Activated B cell treated with CpG ODN at 0.5 μM for 24 hours (primary cell): ENCODE measurements at regions of chr10 and their contacts with region 1.

Region 1: DNA sequence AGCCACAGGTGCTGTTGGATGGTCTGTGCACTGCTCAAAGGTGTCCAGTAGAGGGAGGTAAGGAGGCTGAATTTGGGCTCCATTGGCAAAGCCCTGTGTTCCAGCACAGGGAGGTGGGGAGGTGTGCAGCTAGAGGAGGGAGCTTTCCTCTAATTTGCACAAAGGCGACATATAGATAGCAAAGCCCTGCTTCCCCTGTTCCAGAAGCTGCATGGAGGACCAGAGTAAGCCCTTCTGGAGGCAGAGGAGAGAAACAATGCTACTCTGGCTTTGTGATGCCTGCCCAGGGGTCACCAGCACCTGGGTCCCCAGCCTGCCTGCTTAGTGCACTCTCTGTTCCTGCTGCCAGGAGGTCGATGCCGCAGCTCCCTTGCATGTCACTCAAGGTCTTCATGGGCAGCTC is 3.4 kb upstream of the ARHGAP22 start:
- DNase-seq: no peak
- ATAC-seq: peak; percentile 89
- H3K4me3 Mint-ChIP-seq: no peak overlapping the region
- H3K27ac Mint-ChIP-seq: no peak overlapping the region
- H3K4me1 Mint-ChIP-seq: peaks cover 41% of the 10 kb centered on the region
- H3K27me3 Mint-ChIP-seq: peaks cover 6% of the 10 kb centered on the region
- CTCF ChIP-seq: no peak

Region 2: GRCh38 chr10:48363617-48364355 is 244.5 kb before region 1 on chr10:
- CTCF ChIA-PET with region 1: interaction called, 4 read pairs
- POLR2A ChIA-PET with region 1: no interaction called
- intact Hi-C with region 1: loop called (anchors 1 kb)
- DNase-seq: no peak
- ATAC-seq: no peak
- H3K4me3 Mint-ChIP-seq: no peak overlapping the region
- H3K27ac Mint-ChIP-seq: no peak overlapping the region
- H3K4me1 Mint-ChIP-seq: peaks cover 3% of the 10 kb centered on the region
- H3K27me3 Mint-ChIP-seq: no peaks in the 10 kb centered on the region
- CTCF ChIP-seq: no peak

Region 3: DNA sequence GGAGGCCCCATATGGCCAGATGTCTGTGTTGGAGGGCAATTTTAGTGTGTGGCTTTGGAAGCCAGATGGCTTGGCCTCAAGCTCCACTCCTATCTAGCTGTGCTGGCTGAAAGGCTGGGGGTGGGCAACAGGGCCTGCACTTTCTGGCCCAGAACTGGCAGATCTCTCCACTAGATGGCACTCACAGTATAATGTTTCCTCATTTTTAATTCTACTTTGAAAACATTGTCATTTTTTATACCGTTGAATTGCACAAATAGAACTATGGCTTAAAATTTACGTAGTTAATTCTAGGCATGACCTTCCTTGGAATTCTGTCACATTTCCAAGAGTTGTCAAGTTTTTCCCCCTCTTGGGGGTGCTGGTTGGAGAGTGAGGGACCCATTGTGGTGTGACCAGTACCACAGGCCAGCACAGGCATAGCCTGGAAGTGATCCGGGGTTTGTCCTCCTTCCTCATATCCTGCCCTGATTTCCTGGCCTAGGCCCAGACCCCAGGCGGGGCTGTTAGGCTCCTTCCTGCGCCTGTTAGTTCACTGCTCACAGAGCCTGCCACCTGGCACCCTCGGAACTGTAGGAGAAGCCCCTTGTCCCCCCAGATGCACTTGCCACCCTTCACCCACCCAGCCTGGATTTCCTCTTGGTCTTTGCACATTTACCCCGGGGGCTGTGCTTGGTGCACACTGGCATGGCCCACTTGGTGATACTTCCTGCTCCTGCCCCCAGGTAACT is 56.3 kb before region 1 on chr10:
- CTCF ChIA-PET with region 1: interaction called, 59 read pairs
- POLR2A ChIA-PET with region 1: interaction called, 4 read pairs
- intact Hi-C with region 1: loop called (anchors 1 kb)
- DNase-seq: peak; percentile 27
- ATAC-seq: peak; percentile 89
- H3K4me3 Mint-ChIP-seq: no peak overlapping the region
- H3K27ac Mint-ChIP-seq: no peak overlapping the region
- H3K4me1 Mint-ChIP-seq: peaks cover 11% of the 10 kb centered on the region
- H3K27me3 Mint-ChIP-seq: peaks cover 5% of the 10 kb centered on the region
- CTCF ChIP-seq: no peak

Region 4: DNA sequence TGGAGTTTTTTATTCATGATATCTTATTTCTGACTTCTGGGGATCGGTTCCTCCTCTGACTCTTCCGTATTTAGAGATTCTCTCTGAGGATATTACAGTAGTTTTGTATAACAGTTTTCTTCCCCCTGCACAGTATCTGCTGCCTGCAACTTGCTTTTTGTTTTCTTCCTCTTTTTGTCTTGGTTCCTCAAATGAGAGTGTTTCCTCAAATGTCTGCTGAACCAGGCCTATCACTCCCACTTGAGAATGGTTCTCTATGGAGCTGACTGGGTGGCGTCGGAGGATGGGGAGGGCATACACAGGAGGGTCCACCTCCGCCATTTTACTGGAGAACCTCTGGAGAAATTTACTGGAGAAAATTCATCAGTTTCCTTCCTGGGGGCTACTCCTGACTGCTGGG is 31.1 kb before region 1 on chr10:
- CTCF ChIA-PET with region 1: interaction called, 13 read pairs
- POLR2A ChIA-PET with region 1: interaction called, 4 read pairs
- intact Hi-C with region 1: loop called (anchors 1 kb)
- DNase-seq: no peak
- ATAC-seq: peak; percentile 65
- H3K4me3 Mint-ChIP-seq: peak overlapping the region; percentile 41
- H3K27ac Mint-ChIP-seq: peak overlapping the region; percentile 82
- H3K4me1 Mint-ChIP-seq: peaks cover 92% of the 10 kb centered on the region
- H3K27me3 Mint-ChIP-seq: no peaks in the 10 kb centered on the region
- CTCF ChIP-seq: no peak

Region 5: DNA sequence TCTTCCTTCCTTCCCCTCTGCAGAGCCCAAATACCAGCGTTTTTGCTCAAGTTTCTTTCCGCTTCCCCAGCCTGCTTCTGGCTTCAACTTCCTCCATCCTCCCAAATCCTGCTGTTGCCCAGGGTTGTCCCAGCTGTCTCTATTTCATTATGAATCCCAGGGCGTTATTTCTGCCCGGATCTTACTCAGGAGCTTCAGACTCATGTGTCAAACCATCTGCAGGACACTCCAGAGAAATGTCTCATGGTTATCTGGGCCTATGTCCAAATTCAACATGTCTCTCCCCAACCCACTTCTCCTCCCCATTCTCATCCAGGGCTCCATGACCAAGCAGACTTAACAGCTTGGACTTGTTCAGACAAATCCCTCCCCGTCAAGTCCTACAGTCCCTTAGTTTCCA is 19.0 kb before region 1 on chr10:
- CTCF ChIA-PET with region 1: interaction called, 16 read pairs
- POLR2A ChIA-PET with region 1: no interaction called
- intact Hi-C with region 1: no loop called
- DNase-seq: no peak
- ATAC-seq: no peak
- H3K4me3 Mint-ChIP-seq: no peak overlapping the region
- H3K27ac Mint-ChIP-seq: no peak overlapping the region
- H3K4me1 Mint-ChIP-seq: peaks cover 15% of the 10 kb centered on the region
- H3K27me3 Mint-ChIP-seq: no peaks in the 10 kb centered on the region
- CTCF ChIP-seq: no peak

Region 6: GRCh38 chr10:48623607-48624132 is 15.4 kb after region 1 on chr10:
- CTCF ChIA-PET with region 1: interaction called, 15 read pairs
- POLR2A ChIA-PET with region 1: no interaction called
- intact Hi-C with region 1: no loop called
- DNase-seq: no peak
- ATAC-seq: no peak
- H3K4me3 Mint-ChIP-seq: no peak overlapping the region
- H3K27ac Mint-ChIP-seq: no peak overlapping the region
- H3K4me1 Mint-ChIP-seq: peaks cover 36% of the 10 kb centered on the region
- H3K27me3 Mint-ChIP-seq: peaks cover 1% of the 10 kb centered on the region
- CTCF ChIP-seq: no peak

Region 7: GRCh38 chr10:48634198-48634983 is 26.1 kb after region 1 on chr10:
- CTCF ChIA-PET with region 1: interaction called, 15 read pairs
- POLR2A ChIA-PET with region 1: no interaction called
- intact Hi-C with region 1: loop called (anchors 1 kb)
- DNase-seq: peak; percentile 67
- ATAC-seq: peak; percentile 100
- H3K4me3 Mint-ChIP-seq: peak overlapping the region; percentile 71
- H3K27ac Mint-ChIP-seq: peak overlapping the region; percentile 74
- H3K4me1 Mint-ChIP-seq: peaks cover 45% of the 10 kb centered on the region
- H3K27me3 Mint-ChIP-seq: peaks cover 17% of the 10 kb centered on the region
- CTCF ChIP-seq: no peak